A673 (cell line): ENCODE measurements at regions of chr9 and their contacts with region 1.

Region 1: DNA sequence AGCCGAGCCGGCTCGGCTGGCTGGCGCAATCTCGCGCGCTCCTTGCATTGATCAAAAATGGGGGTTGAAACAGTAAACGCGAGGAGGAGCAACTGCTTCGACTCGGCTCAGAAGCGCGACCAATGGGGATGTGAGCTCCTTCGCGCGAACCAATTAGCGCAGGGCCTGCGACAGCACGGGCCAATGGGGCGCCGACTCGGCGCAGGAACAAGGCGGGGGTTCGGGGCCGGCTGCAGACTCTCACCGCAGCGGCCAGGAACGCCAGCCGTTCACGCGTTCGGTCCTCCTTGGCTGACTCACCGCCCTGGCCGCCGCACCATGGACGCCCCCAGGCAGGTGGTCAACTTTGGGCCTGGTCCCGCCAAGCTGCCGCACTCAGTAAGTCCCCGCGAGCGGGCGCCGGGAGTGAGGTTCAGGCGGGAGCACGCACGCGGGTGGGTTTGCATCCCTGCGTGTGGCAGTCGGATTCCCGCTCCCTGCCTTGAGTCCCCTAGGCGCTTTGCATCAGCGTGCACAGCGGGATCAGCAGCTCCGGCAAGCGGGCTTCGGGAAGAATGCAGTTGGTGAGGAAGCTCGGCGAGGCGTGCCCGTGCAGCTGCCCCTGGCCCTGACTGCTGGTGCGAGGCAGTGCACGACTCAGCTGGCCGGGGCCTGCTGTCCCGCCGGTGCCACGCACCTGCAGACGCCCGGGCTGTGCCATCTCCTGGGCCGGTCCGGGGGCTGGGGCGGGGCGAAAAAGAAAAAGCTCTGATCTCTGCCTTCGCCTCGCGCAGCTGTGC is at the start of gene PSAT1:
- DNase-seq: peak; percentile 99
- H3K4me3 ChIP-seq: peak within 1 kb of the TSS; percentile 94
- H3K27ac ChIP-seq: peak within 1 kb of the TSS; percentile 97
- H3K4me1 ChIP-seq: peaks cover 15% of the 10 kb centered on the region
- H3K27me3 ChIP-seq: no peaks in the 10 kb centered on the region
- CTCF ChIP-seq: no peak
- total RNA-seq, gene PSAT1: 179 and 217 TPM in 2 replicates

Region 2: GRCh38 chr9:77981332-77981731 is 315.8 kb before region 1 on chr9:
- CTCF ChIA-PET with region 1: no interaction called
- POLR2A ChIA-PET with region 1: no interaction called
- intact Hi-C with region 1: no loop called
- DNase-seq: no peak
- H3K4me3 ChIP-seq: no peak overlapping the region
- H3K27ac ChIP-seq: no peak overlapping the region
- H3K4me1 ChIP-seq: peaks cover 54% of the 10 kb centered on the region
- H3K27me3 ChIP-seq: no peaks in the 10 kb centered on the region
- CTCF ChIP-seq: no peak

Region 3: DNA sequence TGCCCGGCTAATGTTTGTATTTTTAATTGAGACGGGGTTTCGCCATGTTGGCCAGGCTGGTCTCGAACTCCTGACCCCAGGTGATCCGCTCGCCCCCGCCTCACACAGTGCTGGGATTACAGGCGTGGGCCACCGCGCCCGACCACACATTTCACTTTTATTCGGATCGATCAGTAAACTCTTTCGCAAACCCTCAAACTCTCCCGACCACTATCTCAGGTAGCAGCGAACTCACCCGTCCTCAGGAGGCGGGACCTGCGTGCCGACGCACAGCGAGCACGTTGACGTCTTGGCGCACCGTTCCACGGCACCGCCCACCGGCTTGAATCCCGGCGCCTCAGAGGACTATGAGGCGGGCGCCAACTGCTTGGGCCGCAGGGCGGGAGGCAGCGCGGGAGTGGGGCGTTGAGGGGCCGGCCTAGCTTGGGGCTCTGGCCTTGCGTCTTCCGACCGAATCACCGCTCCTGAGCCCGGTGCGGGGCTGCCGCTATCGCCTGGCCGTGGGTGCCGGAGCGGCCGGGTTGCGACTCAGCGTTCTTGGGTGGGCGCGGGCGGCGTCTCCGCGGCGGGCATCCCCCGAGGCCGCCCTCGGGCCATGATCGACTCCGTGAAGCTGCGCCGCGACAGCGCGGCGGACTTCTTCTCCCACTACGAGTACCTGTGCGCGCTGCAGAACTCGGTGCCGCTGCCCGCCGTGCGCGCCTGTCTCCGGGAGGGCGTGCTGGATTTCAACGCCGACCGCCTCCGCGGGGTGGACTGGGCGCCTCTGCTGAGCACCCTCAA is 61.1 kb before region 1 on chr9 and contains the start of gene CEP78:
- CTCF ChIA-PET with region 1: no interaction called
- POLR2A ChIA-PET with region 1: interaction called, 3 read pairs
- intact Hi-C with region 1: loop called (anchors 1 kb)
- DNase-seq: peak; percentile 97
- H3K4me3 ChIP-seq: peak within 1 kb of the TSS; percentile 80
- H3K27ac ChIP-seq: peak within 1 kb of the TSS; percentile 91
- H3K4me1 ChIP-seq: peaks cover 11% of the 10 kb centered on the region
- H3K27me3 ChIP-seq: no peaks in the 10 kb centered on the region
- CTCF ChIP-seq: no peak
- total RNA-seq, gene CEP78: 60.5 and 65.9 TPM in 2 replicates

Region 4: GRCh38 chr9:78321505-78321904 is 24.4 kb after region 1 on chr9:
- CTCF ChIA-PET with region 1: no interaction called
- POLR2A ChIA-PET with region 1: interaction called, 11 read pairs
- intact Hi-C with region 1: no loop called
- DNase-seq: no peak
- H3K4me3 ChIP-seq: no peak overlapping the region
- H3K27ac ChIP-seq: no peak overlapping the region
- H3K4me1 ChIP-seq: peaks cover 10% of the 10 kb centered on the region
- H3K27me3 ChIP-seq: no peaks in the 10 kb centered on the region
- CTCF ChIP-seq: no peak

Region 5: GRCh38 chr9:78725503-78725902 is 428.4 kb after region 1 on chr9:
- CTCF ChIA-PET with region 1: no interaction called
- POLR2A ChIA-PET with region 1: no interaction called
- intact Hi-C with region 1: no loop called
- DNase-seq: no peak
- H3K4me3 ChIP-seq: no peak overlapping the region
- H3K27ac ChIP-seq: no peak overlapping the region
- H3K4me1 ChIP-seq: no peaks in the 10 kb centered on the region
- H3K27me3 ChIP-seq: no peaks in the 10 kb centered on the region
- CTCF ChIP-seq: no peak